ENCODE measurements at regions of chr2 and their contacts with region 1.

Region 1: GRCh38 chr2:112749755-112750559 is 14.5 kb downstream of the CKAP2L start:
- DNase-seq: peak; percentile 76
- ATAC-seq: peak; percentile 56

Region 2: DNA sequence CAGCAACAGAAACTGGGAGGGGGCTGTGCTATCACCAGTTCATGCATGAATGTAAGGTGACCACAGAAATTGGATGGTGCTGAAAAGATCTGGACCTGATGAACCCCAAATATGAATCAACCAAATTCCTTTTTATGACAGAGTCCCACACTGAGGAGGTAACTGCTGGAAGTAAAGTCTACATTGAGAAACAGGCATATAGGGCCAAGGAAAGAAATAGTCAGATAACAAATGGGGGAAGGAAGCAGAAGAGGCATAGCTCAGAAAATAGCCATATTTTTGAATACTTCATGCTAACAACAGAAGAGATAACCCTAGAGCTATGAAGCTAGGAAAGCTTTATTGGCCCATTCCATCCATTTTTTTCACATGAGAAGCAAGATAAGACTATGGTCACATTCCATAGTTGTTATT is 448.8 kb before region 1 on chr2:
- intact Hi-C with region 1: no loop called
- DNase-seq: no peak
- ATAC-seq: no peak

Region 3: GRCh38 chr2:112884869-112885505 is 135.0 kb after region 1 on chr2:
- intact Hi-C with region 1: loop called (anchors 5 kb)
- DNase-seq: no peak
- ATAC-seq: no peak

Region 4: DNA sequence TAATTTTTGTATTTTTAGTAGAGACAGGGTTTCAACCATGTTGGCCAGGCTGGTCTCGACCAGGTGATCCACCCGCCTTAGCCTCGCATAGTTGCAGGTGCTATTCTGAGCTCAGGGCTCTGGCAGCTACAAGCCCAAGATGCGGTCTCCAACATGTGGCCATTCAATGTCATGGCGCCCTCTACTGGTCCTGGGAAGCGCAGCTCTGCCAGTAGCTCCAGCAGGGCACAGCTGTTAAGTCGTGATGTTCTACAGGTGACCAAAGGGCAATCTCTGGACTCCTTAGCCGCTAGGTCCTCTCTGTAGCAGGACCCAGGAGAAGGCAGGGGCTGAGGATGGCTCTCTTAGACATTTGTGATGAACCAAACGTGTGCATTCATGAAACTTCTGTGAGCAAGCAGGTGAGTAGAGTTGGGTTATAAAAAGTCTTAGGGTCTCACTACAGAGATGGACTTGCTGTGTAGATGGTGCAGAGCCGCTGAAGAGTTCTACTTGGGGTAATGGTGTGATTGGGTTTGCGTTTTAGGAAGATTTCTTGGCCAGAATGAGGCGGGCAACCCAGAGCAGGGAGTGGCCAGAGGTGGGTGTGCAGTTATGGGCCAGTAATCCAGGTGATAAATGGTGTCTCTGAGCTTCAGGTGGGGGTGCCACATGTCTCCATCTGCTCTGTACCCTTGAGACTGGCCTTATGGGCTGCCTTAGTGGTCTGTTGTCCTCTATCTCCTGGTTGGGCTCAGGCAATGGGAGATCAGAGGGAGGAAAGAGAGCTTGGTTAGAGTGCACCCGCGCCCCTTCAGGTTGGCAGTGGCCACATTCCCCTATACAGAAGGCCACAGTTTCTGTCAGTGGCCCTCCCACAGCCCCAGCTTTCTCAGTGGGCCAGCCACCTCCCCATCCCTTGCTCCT is 192.0 kb after region 1 on chr2:
- intact Hi-C with region 1: loop called (anchors 5 kb)
- DNase-seq: peak; percentile 75
- ATAC-seq: no peak

Region 5: GRCh38 chr2:112958428-112959108 is 208.6 kb after region 1 on chr2:
- intact Hi-C with region 1: loop called (anchors 5 kb)
- DNase-seq: no peak
- ATAC-seq: peak; percentile 59